Heart left ventricle (tissue), 16 donors: ENCODE measurements at regions of chr17 and their contacts with region 1.

Region 1: DNA sequence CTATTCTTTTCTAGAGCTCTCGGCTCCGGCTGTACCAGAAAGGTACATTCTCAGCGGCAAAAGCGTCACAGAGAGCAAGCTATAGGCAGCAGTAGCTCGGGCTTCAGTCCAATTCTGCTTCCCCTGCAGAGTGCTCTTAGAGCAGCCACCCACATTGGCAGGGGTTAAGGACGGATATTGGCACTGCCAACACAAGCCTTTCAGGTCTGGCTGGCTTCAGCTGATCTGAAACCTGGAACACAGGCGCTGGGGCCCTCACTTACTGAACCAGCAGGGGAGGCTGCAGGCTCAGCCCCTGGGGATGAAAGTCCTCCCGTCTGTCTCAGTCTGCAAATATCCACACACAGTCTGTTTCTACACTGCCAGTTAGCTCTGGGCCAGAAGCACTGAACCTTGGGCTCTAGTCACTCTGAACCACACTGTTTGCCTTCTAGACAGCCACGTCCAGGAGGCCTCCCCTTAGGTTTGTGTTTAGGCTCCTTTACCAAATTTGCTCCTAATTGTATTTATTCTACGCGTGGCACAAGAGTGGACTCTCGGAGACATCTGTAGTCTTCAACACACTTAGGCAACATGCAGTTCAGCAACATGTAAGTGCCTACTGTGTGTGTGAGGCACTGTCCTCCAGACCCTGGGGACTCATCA is 40.1 kb downstream of the HIC1 start:
- DNase-seq: peak; percentile 76 to 87 (median 82)
- ATAC-seq: peak; percentile 85 to 93 (median 92)
- H3K4me3 ChIP-seq: peak overlapping the region in 1 of 12 donors; percentile 16
- H3K27ac ChIP-seq: peak overlapping the region in 11 of 12 donors; percentile 8 to 57 (median 45)
- H3K4me1 ChIP-seq: peaks cover 0 to 43% (median 27%) of the 10 kb centered on the region in 12 donors
- H3K27me3 ChIP-seq: no peaks in the 10 kb centered on the region
- CTCF ChIP-seq: peak; percentile 37 to 82 (median 74)
- POLR2A ChIP-seq: no peak

Region 2: DNA sequence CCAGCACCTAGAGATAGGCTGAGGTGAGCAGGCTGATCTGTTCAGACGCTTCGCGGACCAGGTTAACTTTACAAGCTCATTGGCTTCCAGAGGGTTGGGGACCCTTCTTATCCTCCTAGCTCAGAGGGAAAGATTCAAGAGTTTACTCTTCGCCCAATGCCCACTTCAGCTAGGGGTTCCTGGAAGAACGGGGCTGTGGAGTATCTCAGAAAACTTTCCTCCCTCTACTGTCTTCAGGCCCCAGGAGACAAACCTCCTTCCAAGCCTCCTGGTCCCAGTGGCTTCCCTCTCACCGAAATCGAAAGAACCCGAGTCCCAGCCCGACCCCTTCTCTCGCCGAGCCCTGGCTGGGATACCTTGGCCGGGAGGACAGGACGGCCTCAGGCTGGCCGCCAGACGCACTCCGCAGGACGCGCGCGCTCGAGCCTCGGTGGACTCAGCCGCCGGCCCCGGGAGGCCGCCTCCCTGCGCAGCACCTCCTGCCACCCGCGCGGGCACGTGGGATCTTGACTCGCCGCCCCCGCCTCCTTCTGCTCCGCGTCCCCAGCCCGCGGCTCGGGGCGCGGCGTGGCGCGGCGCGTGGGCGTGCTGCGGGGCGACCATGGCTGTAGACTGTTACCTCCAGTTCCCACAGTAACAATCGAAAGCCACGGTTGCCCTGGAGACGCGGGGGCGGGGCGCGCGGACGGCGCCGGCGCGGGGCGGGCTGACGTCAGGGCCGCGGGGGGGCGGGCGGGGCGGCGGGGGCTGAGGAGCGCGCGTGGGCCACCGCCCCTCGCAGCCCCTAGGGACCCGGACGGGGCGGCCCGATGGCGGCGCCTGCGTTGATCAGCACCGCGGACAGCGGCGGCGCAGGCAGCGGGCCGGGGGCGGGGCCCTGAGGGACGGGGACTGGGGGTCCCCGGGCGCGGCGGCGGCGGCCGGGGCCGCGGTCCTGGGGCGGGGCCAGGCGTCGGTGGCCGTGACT is 45.4 kb before region 1 on chr17:
- intact Hi-C with region 1: no loop called
- DNase-seq: peak; percentile 86 to 93 (median 90)
- ATAC-seq: peak in 3 of 4 donors; percentile 52 to 61 (median 61)
- H3K4me3 ChIP-seq: peak overlapping the region; percentile 45 to 98 (median 80)
- H3K27ac ChIP-seq: peak overlapping the region in 8 of 12 donors; percentile 15 to 80 (median 56)
- H3K4me1 ChIP-seq: peaks cover 4 to 53% (median 39%) of the 10 kb centered on the region in 12 donors
- H3K27me3 ChIP-seq: peaks cover 0 to 41% (median 0%) of the 10 kb centered on the region in 9 donors
- CTCF ChIP-seq: no peak
- POLR2A ChIP-seq: no peak

Region 3: DNA sequence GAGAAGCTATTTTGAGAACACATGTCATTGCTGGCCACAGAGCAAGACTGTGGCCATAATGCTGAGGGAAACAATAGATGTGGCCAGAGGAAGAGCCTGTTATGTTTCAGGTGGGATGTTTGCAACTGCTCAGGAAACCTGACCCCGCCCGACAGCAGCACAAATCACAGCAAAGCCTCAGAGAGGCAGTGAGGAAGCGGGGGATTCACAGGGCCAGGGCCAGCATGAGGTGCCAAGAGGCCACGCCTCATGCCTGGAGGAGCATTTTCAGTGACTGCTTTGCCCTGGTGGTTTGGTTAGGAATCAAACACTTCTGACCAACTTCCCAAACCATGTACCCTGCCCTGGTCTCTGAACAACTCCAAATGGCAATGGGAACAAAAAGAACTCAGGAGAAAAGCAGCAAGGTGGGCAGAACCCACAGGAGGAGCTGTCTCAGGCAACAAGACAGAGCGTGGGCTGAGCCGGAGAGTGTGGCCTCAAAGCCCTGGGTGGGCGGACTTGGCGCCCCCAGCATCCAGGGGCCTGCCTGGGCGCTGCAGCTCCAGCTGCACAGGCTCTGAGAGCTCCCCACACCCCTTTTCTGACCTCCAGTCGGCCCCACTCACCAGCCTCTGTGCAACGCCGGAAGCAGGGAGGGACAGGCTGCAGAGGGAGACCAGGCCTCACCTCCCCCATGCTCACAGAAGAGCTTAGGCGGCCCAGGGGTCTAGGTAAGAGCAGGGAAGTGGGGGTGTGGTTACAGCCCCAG is 19.5 kb before region 1 on chr17:
- intact Hi-C with region 1: no loop called
- DNase-seq: peak in 4 of 5 donors; percentile 71 to 81 (median 72)
- ATAC-seq: peak; percentile 67 to 78 (median 72)
- H3K4me3 ChIP-seq: no peak overlapping the region
- H3K27ac ChIP-seq: peak overlapping the region; percentile 81 to 98 (median 86)
- H3K4me1 ChIP-seq: peaks cover 15 to 75% (median 57%) of the 10 kb centered on the region in 12 donors
- H3K27me3 ChIP-seq: no peaks in the 10 kb centered on the region
- CTCF ChIP-seq: peak in 4 of 12 donors; percentile 6 to 25 (median 14)
- POLR2A ChIP-seq: no peak

Region 4: GRCh38 chr17:2222901-2223616 is 128.0 kb after region 1 on chr17:
- intact Hi-C with region 1: loop called in 2 of 10 experiments (anchors 5 kb)
- DNase-seq: peak in 4 of 5 donors; percentile 59 to 87 (median 72)
- ATAC-seq: peak; percentile 93 to 98 (median 96)
- H3K4me3 ChIP-seq: no peak overlapping the region
- H3K27ac ChIP-seq: peak overlapping the region in 11 of 12 donors; percentile 33 to 82 (median 71)
- H3K4me1 ChIP-seq: peaks cover 0 to 32% (median 15%) of the 10 kb centered on the region in 12 donors
- H3K27me3 ChIP-seq: no peaks in the 10 kb centered on the region
- CTCF ChIP-seq: peak in 1 of 12 donors; percentile 6
- POLR2A ChIP-seq: no peak

Region 5: DNA sequence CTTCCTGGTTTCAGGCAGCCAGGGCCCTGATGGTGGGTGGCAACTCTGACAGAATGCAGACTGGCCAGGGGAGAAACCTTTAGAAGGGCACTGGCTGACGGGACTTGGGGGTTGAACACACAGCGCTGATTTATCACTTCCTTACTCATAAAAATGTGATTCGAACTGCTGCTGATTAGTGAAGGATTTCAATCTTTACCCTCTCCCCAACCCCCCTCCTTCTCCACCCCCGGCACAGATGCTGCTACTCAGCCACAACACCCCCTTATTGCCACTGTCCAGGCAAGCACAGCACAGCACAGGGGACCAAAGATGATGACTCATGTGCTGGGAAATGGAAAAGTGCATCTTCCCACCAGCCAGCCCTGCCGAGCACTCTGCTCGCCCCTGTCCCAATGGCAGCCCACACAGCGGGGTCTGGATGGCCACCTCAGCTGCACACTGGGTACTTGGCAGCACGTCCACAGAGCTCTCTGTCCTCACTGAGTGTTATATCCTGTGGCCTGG is 138.5 kb after region 1 on chr17:
- intact Hi-C with region 1: loop called in 6 of 10 experiments (anchors 1 to 10 kb)
- DNase-seq: peak in 3 of 5 donors; percentile 26 to 62 (median 29)
- ATAC-seq: peak in 3 of 4 donors; percentile 19 to 64 (median 46)
- H3K4me3 ChIP-seq: no peak overlapping the region
- H3K27ac ChIP-seq: peak overlapping the region; percentile 9 to 84 (median 56)
- H3K4me1 ChIP-seq: peaks cover 3 to 80% (median 50%) of the 10 kb centered on the region in 12 donors
- H3K27me3 ChIP-seq: no peaks in the 10 kb centered on the region
- CTCF ChIP-seq: no peak
- POLR2A ChIP-seq: no peak

Region 6: GRCh38 chr17:2244545-2245525 is 149.8 kb after region 1 on chr17:
- intact Hi-C with region 1: loop called in 4 of 10 experiments (anchors 1 to 5 kb)
- DNase-seq: peak; percentile 84 to 94 (median 87)
- ATAC-seq: peak; percentile 79 to 92 (median 88)
- H3K4me3 ChIP-seq: no peak overlapping the region
- H3K27ac ChIP-seq: peak overlapping the region in 11 of 12 donors; percentile 22 to 75 (median 56)
- H3K4me1 ChIP-seq: peaks cover 0 to 26% (median 13%) of the 10 kb centered on the region in 12 donors
- H3K27me3 ChIP-seq: no peaks in the 10 kb centered on the region
- CTCF ChIP-seq: peak in 11 of 12 donors; percentile 95 to 100 (median 97)
- POLR2A ChIP-seq: no peak

Region 7: GRCh38 chr17:2282297-2282873 is 187.4 kb after region 1 on chr17:
- intact Hi-C with region 1: no loop called
- DNase-seq: no peak
- ATAC-seq: peak in 3 of 4 donors; percentile 48 to 80 (median 65)
- H3K4me3 ChIP-seq: no peak overlapping the region
- H3K27ac ChIP-seq: no peak overlapping the region
- H3K4me1 ChIP-seq: peaks cover 0 to 16% (median 0%) of the 10 kb centered on the region in 12 donors
- H3K27me3 ChIP-seq: no peaks in the 10 kb centered on the region
- CTCF ChIP-seq: peak; percentile 42 to 72 (median 62)
- POLR2A ChIP-seq: no peak